GM18951 (cell line): ENCODE measurements at regions of chr6 and their contacts with region 1.

Region 1: DNA sequence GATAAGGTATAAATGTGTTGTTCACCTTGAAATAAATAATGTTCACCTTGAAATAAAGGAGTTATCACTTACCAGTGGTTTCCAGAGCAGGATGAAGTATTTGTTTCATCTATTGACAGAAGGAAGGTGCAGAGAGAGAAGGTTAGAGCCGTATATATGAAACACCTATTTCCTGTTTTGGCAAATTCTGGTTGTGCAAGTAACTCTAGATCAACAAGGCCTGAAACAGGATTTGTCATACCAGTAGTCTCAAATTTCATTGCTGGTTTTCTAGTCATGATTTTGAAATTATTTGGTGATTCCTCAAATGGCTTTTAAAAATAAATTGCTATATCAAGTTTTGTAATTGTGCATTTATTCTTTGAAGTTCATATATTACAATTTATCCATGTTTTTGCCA is at the start of gene CRISP3:
- POLR2A ChIP-seq: no peak

Region 2: GRCh38 chr6:48255094-48255493 is 1489.2 kb before region 1 on chr6:
- in situ Hi-C with region 1: loop called (anchors 10 kb)
- POLR2A ChIP-seq: no peak

Region 3: GRCh38 chr6:49050584-49050983 is 693.7 kb before region 1 on chr6:
- in situ Hi-C with region 1: no loop called
- POLR2A ChIP-seq: no peak

Region 4: GRCh38 chr6:49835140-49835539 is 90.9 kb after region 1 on chr6:
- in situ Hi-C with region 1: loop called (anchors 10 kb)
- POLR2A ChIP-seq: no peak